ENCODE measurements at regions of chr2 and their contacts with region 1.

Region 1: DNA sequence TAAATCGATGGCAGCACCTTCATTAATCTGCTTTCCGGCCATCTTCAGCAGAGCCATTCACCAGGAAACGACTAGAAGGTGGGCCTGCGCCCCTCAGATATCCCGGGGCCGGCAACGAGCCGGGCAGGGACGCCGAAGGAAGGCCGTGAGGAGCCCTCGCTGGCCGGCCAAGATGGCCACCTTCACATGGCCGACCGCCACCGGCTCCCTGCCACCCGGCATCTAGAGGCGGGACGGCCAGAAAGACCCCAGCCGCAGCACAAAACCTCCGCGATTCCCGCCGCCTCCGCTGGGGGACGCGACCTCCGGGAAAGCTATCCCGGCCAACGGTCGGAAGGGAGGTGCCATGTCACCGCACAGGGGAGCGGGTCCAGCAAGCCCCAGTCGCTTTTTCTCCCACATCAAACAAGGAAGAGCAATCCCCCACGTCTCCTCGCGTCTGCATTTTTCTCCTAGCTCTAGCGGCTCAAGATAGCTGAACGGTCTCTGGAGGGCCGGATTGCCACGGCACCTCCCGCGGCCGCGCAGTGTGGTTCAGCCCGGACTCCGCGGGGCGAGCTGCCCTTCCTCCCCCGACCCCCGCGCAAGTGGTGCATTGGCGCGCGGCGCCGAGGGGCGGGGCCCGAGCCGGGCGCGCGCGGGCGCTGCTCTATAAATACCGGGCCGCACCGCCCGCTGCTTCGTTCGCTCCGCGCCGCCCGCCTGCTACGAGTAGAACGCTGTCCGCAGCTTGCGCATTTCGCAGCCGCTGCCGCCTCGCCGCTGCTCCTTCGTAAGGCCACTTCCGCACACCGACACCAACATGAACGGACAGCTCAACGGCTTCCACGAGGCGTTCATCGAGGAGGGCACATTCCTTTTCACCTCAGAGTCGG is at the start of gene MAT2A:
- DNase-seq: peak; percentile 85
- H3K4me3 Mint-ChIP-seq: peak within 1 kb of the TSS; percentile 97
- H3K27ac Mint-ChIP-seq: peak within 1 kb of the TSS; percentile 97
- H3K4me1 Mint-ChIP-seq: peaks cover 43% of the 10 kb centered on the region
- H3K27me3 Mint-ChIP-seq: no peaks in the 10 kb centered on the region
- total RNA-seq, gene MAT2A: 395 and 403 TPM in 2 replicates

Region 2: DNA sequence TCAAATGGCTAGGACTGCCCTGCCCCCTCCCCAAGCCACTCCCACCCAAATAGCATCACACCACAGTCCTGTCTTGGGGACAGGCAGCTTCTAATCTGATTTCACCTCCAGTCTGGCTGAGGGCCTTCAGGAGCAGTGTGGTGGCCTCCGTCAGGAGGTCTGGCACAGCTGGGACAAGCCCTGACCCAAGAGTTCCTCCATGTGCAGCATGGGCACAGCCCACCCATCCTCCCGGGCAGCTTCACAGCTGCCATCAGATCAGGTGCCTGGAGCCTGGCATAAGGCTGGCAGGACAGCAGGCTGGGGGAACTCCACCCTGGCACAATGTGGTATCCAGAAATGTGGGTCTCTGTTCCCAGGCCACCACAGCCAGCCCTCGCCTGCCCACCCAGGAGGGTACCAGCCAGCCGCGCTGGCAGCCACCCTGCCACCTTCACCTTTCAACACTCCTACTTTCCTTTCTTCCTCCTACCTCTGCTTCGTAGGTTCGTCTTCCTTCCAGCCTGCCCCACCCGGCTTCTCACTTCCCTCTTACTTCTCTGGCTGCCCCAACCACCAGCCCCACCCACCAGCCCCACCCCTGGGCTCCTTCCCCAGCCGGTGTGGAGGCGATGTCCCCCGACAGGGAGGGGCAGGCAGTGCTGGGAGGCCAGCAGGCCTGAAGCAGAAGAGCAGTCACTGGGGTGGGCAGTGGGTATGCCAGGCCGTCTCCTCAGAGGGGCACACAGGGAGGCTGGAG is 128.7 kb before region 1 on chr2 and contains the start of gene CAPG:
- intact Hi-C with region 1: loop called (anchors 2 kb)
- DNase-seq: peak; percentile 56
- H3K4me3 Mint-ChIP-seq: peak within 1 kb of the TSS; percentile 88
- H3K27ac Mint-ChIP-seq: peak within 1 kb of the TSS; percentile 83
- H3K4me1 Mint-ChIP-seq: peaks cover 56% of the 10 kb centered on the region
- H3K27me3 Mint-ChIP-seq: no peaks in the 10 kb centered on the region
- total RNA-seq, gene CAPG: 145 and 146 TPM in 2 replicates

Region 3: GRCh38 chr2:85437488-85438284 is 101.0 kb before region 1 on chr2:
- intact Hi-C with region 1: loop called (anchors 1 kb)
- DNase-seq: peak; percentile 70
- H3K4me3 Mint-ChIP-seq: peak overlapping the region; percentile 82
- H3K27ac Mint-ChIP-seq: peak overlapping the region; percentile 98
- H3K4me1 Mint-ChIP-seq: peaks cover 28% of the 10 kb centered on the region
- H3K27me3 Mint-ChIP-seq: no peaks in the 10 kb centered on the region

Region 4: GRCh38 chr2:85602476-85603234 is 63.9 kb after region 1 on chr2 and contains the start of gene TMEM150A:
- intact Hi-C with region 1: loop called (anchors 5 kb)
- DNase-seq: peak; percentile 75
- H3K4me3 Mint-ChIP-seq: peak within 1 kb of the TSS; percentile 83
- H3K27ac Mint-ChIP-seq: peak within 1 kb of the TSS; percentile 33
- H3K4me1 Mint-ChIP-seq: peaks cover 9% of the 10 kb centered on the region
- H3K27me3 Mint-ChIP-seq: no peaks in the 10 kb centered on the region
- total RNA-seq, gene TMEM150A: 6.5 and 7.0 TPM in 2 replicates

Region 5: DNA sequence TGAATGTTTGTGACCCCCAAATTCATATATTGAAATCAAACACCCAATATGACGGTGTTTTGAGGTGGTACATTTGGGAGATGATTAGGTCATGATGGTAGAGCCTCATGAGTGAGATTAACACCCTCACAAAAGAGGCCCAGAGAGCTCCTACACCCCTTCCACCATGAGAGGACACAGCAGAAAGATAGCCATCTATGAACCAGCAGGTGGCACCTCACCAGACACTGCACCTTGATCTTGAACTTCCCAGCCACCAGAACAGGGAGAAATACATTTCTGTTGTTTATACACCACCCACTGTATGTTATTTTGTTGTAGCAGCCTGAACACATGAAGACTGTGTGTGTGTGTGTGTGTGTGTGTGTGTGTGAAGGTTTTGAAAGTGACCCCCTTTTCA is 291.9 kb after region 1 on chr2:
- intact Hi-C with region 1: no loop called
- DNase-seq: no peak
- H3K4me3 Mint-ChIP-seq: no peak overlapping the region
- H3K27ac Mint-ChIP-seq: no peak overlapping the region
- H3K4me1 Mint-ChIP-seq: peaks cover 40% of the 10 kb centered on the region
- H3K27me3 Mint-ChIP-seq: peaks cover 22% of the 10 kb centered on the region

Measured in activated T-helper 2 cell treated with anti-CD3 and anti-CD28 coated beads, Interferon-gamma antibody, Interleukin-2, Interleukin-4, amounts not matched to agents 10 μg/mL and 5 μg/mL and 100 μg/mL, durations not matched to agents 14 hours and 24 hours and 36 hours (primary cell).